Panc1 (cell line): ENCODE measurements at regions of chr1 and their contacts with region 1.

Region 1: DNA sequence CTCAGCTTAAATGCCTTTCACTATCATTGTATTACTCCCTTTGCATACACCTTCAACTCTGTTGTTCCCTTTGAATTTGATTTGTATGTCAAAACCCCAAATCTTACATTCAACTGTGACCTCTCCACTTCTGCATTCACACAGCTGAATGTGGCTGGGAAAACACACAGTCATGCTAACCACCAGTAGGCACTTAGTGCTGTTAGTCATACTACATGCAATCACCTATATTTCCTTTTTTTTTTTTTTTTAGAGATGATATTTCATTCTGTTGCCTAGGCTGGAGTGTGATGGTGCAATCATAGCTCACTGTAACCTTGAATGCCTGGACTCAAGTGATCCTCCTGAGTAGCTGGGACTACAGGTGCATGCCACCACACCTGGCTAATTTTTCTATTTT is 16.2 kb downstream of the BTBD8 start:
- DNase-seq: no peak
- ATAC-seq: no peak
- H3K4me3 ChIP-seq: no peak overlapping the region
- H3K27ac ChIP-seq: no peak overlapping the region
- H3K4me1 ChIP-seq: no peaks in the 10 kb centered on the region
- H3K27me3 ChIP-seq: no peaks in the 10 kb centered on the region; the same call in 1 of the 2 replicates
- CTCF ChIP-seq: no peak

Region 2: DNA sequence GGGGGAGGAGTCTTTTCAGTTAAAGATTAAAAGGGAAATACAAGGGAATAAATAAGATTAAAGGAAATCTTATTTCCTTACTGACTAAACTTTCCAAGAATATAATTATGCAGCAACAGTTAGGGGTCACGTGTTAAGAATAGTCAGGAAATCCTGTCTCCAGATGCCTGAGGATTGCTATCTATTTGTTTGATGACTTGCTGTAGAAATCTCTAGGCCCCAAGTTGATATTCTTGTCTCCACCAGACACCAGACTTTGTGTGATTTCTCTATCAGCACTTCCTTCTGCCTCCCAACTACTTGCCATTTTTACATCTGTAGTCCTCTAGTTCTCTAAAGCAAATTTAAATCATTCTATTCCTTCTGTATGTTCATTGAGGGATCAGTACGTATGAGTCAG is 280.0 kb after region 1 on chr1:
- CTCF ChIA-PET with region 1: no interaction called
- POLR2A ChIA-PET with region 1: no interaction called
- in situ Hi-C with region 1: no loop called
- intact Hi-C with region 1: no loop called
- DNase-seq: no peak
- ATAC-seq: no peak
- H3K4me3 ChIP-seq: no peak overlapping the region
- H3K27ac ChIP-seq: no peak overlapping the region
- H3K4me1 ChIP-seq: no peaks in the 10 kb centered on the region
- H3K27me3 ChIP-seq: no peaks in the 10 kb centered on the region
- CTCF ChIP-seq: no peak

Region 3: GRCh38 chr1:92749024-92749634 is 652.8 kb after region 1 on chr1:
- CTCF ChIA-PET with region 1: interaction called, 10 read pairs
- POLR2A ChIA-PET with region 1: no interaction called
- in situ Hi-C with region 1: no loop called
- intact Hi-C with region 1: no loop called
- DNase-seq: no peak
- ATAC-seq: peak; percentile 74
- H3K4me3 ChIP-seq: no peak overlapping the region
- H3K27ac ChIP-seq: no peak overlapping the region
- H3K4me1 ChIP-seq: no peaks in the 10 kb centered on the region
- H3K27me3 ChIP-seq: no peaks in the 10 kb centered on the region
- CTCF ChIP-seq: peak; percentile 81